Right lobe of liver (tissue), 6 donors: ENCODE measurements at regions of chr22 and their contacts with region 1.

Region 1: DNA sequence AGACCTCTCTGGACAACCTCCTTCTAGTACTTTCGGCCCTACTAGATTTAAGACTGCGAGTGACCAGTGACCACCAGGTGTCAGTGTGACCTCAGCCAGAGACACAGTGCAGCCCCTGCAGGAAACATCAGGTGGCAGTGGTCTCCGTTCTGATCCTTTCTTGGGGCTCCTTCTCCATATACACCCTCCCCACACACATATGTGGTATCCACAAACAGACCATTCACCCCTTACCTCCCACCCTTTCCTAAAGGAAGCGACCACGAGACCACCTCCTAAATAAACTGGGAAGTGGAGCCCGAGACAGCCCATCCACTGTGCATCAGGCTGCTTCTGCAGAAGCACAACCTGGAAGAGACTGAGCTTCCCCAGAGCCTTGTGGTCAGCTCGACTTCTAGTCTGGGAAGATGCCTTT is 38.5 kb upstream of the CYP2D6 start:
- DNase-seq: peak in 2 of 3 donors; percentile 52 to 65
- ATAC-seq: peak; percentile 60 to 81 (median 72)
- H3K4me3 ChIP-seq: no peak overlapping the region
- H3K27ac ChIP-seq: no peak overlapping the region
- H3K4me1 ChIP-seq: peaks cover 0 to 20% (median 9%) of the 10 kb centered on the region in 4 donors
- H3K27me3 ChIP-seq: no peaks in the 10 kb centered on the region
- CTCF ChIP-seq: peak; percentile 85 to 90 (median 88)
- POLR2A ChIP-seq: no peak

Region 2: GRCh38 chr22:42202669-42203068 is 33.6 kb after region 1 on chr22:
- intact Hi-C with region 1: no loop called
- DNase-seq: no peak
- ATAC-seq: no peak
- H3K4me3 ChIP-seq: no peak overlapping the region
- H3K27ac ChIP-seq: no peak overlapping the region
- H3K4me1 ChIP-seq: no peaks in the 10 kb centered on the region
- H3K27me3 ChIP-seq: no peaks in the 10 kb centered on the region
- CTCF ChIP-seq: no peak
- POLR2A ChIP-seq: no peak

Region 3: DNA sequence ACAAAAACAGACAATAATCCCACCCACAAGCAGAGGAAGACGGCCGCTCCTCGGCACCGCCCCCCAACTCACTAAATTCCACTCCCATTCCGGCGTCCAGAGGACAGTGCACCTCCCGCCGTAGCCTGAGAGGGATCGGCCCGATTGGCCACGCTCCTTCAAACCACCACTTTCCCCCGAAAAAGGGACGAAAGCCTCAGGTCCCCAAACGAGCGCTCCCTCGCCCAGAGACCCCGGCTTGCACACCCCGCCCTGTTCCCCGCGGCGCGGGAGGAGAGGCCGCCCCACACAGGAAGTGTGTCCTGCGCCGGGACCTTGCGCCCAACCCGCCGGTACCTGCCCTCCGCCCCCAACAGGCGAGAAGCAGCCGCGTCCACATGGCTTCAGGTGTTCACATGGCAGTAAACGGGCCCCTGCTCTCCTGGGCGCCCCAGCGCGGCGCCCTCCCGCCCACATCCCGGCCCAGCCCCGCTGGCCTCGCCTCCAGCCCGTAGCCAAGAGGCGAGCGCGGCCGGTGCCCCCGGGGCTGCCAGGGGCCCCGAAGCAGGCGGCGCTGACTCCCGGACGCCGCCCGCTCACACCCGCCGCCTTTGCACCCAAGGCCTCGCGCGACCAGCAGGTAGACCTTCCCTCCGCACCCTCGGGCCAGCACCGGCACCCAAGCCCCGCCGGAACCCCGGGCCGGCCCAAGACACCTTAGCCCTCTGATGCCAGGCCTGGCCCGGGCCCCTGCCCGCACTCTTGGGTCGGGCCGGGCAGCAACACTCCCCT is 100.5 kb after region 1 on chr22:
- intact Hi-C with region 1: loop called in 1 of 2 experiments (anchors 10 kb)
- DNase-seq: peak; percentile 83 to 87 (median 86)
- ATAC-seq: peak; percentile 85 to 91 (median 90)
- H3K4me3 ChIP-seq: peak overlapping the region; percentile 93 to 100 (median 97)
- H3K27ac ChIP-seq: peak overlapping the region; percentile 57 to 85 (median 77)
- H3K4me1 ChIP-seq: peaks cover 0 to 13% (median 2%) of the 10 kb centered on the region in 4 donors
- H3K27me3 ChIP-seq: no peaks in the 10 kb centered on the region
- CTCF ChIP-seq: peak in 2 of 4 donors; percentile 13 to 24
- POLR2A ChIP-seq: peak; percentile 49

Region 4: DNA sequence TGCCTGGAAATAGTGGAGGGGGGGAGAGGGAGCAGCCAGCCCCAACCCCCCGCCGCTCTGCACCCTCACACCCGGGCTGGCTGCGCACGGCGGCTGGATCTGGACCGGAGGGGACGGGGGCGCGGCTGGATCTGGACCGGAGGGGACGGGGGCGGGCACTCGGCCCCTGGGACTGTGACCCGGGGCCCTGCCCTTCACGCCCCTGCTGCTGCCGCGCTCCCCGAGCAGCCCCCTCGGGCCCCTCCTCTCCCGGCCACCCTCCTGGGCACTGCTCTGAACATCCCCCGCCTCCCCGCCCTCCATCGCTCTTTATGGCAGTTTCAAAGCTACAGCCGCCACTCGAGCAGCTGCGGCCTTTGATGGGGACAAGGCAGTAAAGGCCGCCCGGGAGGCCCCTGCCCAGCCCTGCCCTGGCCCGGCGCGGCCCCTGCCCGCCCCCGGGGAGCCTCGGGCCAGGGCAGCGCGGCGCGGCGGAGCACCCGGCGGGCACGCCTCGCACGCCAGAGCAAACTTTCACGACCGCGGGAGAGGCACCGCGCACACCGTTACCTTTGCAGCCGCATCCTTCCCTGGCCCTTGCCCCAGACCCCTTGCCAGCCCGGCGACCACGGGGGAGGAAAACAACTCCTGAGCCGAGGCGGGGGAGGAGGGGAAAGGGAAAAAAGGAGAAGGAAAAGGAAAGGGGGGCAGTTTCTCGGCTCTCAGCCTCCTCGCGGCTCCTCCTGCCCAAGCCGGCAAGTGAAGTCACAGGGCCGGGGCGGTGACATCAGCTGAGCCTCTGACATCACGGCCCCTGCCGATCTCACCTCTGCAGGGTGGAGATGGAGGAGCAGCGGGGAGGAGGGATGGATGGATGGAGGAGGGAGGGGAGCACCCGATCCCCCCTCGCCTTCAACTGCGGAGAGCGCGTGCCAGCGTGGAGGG is 114.5 kb after region 1 on chr22:
- intact Hi-C with region 1: no loop called
- DNase-seq: peak in 1 of 3 donors; percentile 21
- ATAC-seq: peak in 1 of 4 donors; percentile 17
- H3K4me3 ChIP-seq: peak overlapping the region in 1 of 3 donors; percentile 7
- H3K27ac ChIP-seq: no peak overlapping the region
- H3K4me1 ChIP-seq: peaks cover 0 to 17% (median 3%) of the 10 kb centered on the region in 4 donors
- H3K27me3 ChIP-seq: peaks cover 0 to 4% of the 10 kb centered on the region in 2 donors
- CTCF ChIP-seq: no peak
- POLR2A ChIP-seq: no peak

Region 5: GRCh38 chr22:42432020-42432596 is 263.0 kb after region 1 on chr22 and contains the start of gene NFAM1:
- intact Hi-C with region 1: loop called (anchors 5 kb)
- DNase-seq: peak; percentile 65 to 82 (median 68)
- ATAC-seq: peak; percentile 58 to 70 (median 62)
- H3K4me3 ChIP-seq: peak within 1 kb of the TSS in 2 of 3 donors; percentile 27 to 32
- H3K27ac ChIP-seq: peak within 1 kb of the TSS; percentile 38 to 68 (median 50)
- H3K4me1 ChIP-seq: peaks cover 0 to 3% (median 0%) of the 10 kb centered on the region in 4 donors
- H3K27me3 ChIP-seq: no peaks in the 10 kb centered on the region
- CTCF ChIP-seq: no peak
- POLR2A ChIP-seq: peak; percentile 65
- total RNA-seq, gene NFAM1: 2.1 to 6.6 (median 2.4) TPM

Region 6: DNA sequence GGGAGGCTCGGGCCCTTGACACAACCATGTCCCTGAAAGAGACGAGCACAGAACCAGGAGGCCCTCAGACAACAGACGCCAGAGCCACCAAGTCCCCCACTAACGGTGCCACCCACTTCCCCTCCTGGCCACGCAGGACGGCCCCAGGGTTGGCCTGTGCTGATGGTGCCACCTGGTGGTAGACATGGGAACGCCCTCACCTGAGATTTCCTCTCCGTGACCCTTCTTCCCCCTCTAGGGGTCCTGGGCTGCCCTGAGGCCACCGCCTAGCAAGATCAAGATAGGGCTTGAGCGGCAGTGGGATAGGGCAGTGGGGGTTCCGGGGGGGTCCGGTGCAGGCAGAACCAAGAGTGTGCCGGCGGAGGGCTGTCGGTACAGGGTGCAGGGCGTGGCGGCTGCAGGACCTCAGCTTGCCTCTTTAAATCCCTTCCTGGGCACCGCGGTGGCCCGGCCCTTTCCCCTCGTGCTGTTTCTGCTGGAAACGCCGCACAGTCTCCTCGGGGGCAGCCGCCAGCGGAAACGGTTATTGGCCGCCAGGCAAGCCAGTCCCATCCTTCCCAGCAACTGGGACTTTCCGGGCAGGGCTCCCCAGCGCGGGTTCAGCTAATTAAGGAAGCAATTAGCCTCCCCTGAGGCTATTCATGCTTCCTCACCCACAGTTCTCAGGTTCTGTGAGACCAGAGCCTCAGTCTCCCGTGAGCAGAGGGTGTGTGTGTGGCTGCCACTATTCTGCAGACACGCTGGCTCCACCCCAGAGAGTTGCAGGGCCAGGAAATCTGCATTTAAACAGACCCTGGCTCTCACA is 268.6 kb after region 1 on chr22:
- intact Hi-C with region 1: loop called (anchors 5 kb)
- DNase-seq: peak; percentile 79 to 84 (median 79)
- ATAC-seq: peak; percentile 84 to 91 (median 88)
- H3K4me3 ChIP-seq: peak overlapping the region; percentile 32 to 50 (median 38)
- H3K27ac ChIP-seq: peak overlapping the region in 1 of 3 donors; percentile 38
- H3K4me1 ChIP-seq: peaks cover 0 to 9% (median 1%) of the 10 kb centered on the region in 4 donors
- H3K27me3 ChIP-seq: no peaks in the 10 kb centered on the region
- CTCF ChIP-seq: peak; percentile 92 to 97 (median 96)
- POLR2A ChIP-seq: no peak